Head of caudate nucleus (tissue), 42 donors: ENCODE measurements at regions of chr11 and their contacts with region 1.

Region 1: GRCh38 chr11:110195845-110196754 is 100.3 kb downstream of the RDX start:
- DNase-seq: no peak

Region 2: GRCh38 chr11:109772841-109773400 is 423.2 kb before region 1 on chr11:
- intact Hi-C with region 1: no loop called
- DNase-seq: no peak

Region 3: GRCh38 chr11:109956124-109956793 is 239.8 kb before region 1 on chr11:
- intact Hi-C with region 1: loop called (anchors 10 kb)
- DNase-seq: no peak

Region 4: DNA sequence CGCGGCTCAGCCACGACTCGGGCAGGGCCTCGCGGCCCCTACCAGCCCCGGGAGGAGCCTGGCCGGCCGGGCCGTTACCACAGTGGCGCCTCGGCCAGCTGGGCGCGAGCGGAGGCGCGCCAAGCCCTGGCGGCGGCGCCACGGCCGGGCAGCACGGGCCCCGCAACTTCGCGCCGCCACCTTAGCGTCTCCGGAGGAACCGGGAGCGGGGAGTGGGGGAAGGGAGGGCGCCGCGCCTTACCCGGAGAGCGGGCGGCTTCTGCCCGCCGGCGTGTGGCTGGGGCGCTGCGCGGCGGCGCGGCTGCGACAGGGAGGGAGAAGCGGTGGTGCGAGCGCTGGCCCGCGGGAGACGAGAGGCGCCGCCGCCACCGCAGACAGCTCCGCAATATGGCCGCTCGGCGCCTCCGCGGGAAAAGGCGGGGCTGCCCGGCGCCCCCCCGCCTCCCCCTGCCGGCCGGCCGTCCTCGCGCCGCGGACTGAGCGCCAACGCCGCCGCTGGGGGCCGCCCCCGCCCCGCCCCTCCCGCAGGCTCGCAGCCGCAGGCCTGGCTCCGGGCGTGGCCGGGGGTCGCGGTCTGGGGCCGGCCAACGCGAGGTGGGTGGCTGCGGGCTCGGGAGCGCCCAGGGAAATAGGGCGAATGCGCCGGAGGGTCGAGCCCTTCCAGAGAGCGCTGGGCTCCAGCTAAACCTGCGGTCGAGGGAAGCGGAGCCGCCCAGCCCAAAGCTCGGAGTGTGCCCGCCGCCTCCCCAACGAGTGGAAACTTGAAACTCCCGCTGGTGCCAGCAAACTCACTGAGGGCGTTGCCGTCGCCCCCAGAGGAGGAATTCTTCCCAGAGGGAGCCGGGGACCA is 100.4 kb after region 1 on chr11 and contains the start of gene RDX:
- intact Hi-C with region 1: loop called (anchors 10 kb)
- DNase-seq: peak; percentile 22 to 89 (median 77)

Region 5: GRCh38 chr11:110376711-110377324 is 180.7 kb after region 1 on chr11:
- intact Hi-C with region 1: loop called (anchors 5 kb)
- DNase-seq: peak in 40 of 42 donors; percentile 5 to 83 (median 55)

Region 6: DNA sequence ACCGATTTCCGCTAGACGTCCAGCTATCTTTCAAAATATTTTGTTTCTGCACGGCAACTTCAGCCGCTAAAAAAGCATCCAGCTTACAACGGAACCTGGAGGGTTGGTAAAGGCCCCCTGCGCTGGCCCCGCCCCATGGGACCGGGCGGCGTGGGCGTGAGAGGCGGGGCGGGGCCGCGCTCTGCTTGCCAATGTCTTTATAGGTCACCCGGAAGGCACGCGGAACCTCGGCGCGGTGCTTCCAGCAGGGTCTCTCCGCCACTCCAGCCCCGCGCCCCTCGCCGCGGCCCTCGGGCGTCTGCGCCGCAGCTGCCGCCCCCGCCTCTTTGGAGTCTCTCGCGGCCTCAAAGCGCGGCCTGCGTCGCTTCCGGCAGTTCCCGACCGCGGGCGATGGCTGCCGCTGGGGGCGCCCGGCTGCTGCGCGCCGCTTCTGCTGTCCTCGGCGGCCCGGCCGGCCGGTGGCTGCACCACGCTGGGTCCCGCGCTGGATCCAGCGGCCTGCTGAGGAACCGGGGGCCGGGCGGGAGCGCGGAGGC is 233.7 kb after region 1 on chr11 and contains the start of gene FDX1:
- intact Hi-C with region 1: loop called (anchors 10 kb)
- DNase-seq: peak; percentile 54 to 91 (median 82)